Cardiac septum (tissue), 1 donor: ENCODE measurements at regions of chr4 and their contacts with region 1.

Region 1: DNA sequence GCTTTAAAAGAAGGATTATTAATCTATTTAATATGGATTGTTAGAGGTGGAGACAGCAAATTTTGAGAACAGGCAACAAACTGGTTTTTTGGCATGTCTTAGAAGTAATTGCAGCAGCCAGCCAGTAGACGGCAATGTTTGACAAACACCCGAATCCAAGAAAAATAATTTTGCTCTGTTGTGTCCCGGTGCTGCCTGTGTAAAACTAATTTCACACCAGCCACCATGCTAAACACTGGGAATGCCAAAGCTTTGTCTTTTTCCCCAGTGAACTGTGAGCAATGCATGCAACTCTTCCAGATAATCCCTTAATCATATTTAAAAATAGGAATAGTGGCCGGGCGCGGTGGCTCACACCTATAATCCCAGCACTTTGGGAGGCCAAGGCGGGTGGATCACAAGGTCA is 25.9 kb downstream of the SMIM31 start:
- DNase-seq: no peak

Region 2: DNA sequence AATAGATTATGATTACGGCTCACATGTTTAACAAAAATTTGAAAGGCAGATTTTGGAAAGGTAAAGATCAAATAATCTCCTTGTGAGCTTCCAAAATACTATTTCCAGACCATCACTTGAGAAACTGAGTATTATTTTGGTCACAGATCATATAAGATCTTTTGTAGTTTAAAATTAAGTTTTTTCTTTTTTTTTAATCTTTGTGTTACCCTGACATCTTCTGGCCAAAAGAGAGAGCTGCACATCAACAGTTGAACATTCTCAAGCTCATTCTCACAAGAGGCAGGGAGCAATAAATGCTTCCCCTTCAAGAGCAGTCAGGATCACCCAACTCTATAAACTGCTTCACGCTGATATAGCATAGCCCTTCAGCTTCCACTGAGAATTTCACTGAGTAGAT is 317.0 kb after region 1 on chr4:
- intact Hi-C with region 1: loop called (anchors 10 kb)
- DNase-seq: no peak